Activated naive CD4-positive, alpha-beta T cell treated with anti-CD3 and anti-CD28 coated beads, Interleukin-2, amount 10 ng/mL, durations not matched to agents 7 days and 5 days (primary cell): ENCODE measurements at regions of chr15 and their contacts with region 1.

Region 1: DNA sequence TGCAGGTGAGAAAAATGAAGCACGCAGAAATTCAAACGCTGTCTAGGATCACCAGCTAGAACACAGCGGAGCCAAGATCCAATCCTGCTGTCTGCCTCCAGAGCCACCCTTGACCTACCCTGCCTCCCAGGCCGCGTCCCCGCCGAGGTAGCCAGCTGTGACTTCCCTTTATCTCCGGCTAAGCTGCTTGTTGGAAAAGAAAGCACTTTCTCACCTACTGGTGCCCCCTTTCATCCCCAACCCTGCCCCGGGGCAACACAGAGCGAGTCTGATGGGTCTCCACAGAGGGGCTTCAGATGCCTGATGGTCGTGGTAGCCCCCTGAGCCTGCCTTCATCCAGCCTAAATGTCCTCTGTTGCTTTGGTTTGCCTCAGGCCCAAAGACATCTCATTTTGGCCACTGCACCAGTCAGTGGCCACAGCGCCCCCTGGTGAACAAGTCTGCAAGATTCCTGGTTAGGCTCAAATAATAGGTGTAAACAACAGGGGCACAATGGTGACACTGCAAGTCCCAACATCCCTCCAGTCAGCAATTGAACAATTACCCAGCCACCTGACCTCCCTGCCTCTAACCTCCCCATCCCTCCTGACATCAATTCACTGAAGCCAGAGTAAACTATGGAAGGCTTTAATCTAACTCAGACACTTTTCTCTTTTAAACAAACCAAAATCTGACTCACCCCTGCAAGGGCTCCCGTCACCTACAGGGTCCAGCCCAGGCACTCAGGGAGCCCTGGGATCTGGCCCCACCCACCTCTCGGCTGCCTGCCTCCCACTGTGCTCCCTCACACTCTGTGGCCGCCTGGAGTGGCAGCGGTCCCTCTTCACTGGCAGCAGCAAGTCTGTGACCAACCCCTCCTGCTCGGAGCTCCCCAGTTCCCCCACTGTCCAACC is 27.3 kb upstream of the BCL2L10 start:
- DNase-seq: peak; percentile 80
- H3K4me3 Mint-ChIP-seq: no peak overlapping the region
- H3K27ac Mint-ChIP-seq: peak overlapping the region; percentile 10
- H3K4me1 Mint-ChIP-seq: peaks cover 17% of the 10 kb centered on the region
- H3K27me3 Mint-ChIP-seq: no peaks in the 10 kb centered on the region

Region 2: DNA sequence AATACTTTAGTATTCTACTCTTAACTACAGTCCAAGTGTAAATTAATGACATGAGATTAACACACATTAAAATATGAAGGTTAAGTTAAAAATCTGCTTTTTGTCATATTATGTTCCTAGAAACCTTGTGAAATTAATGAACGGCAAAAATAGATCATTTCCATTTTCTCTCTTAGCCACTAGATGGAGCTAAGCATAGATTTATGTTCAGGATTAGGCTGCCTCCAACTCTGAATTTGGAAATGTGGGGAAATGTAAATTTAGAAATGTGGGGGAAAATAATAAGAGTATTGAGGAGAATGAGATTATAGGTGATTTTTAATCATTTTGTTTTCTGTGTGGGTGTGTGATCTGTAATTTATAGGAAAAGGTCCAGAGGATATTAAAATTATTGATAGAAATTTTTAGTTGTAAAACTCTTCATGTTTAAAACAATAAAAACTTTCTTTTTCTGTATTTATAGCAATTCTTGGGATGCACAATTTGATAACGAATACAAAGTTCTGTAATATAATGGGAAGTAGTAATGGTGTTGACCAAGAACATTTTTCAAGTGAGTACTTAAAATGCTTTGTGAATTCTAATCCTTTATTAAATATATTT is 251.2 kb before region 1 on chr15:
- CTCF ChIA-PET with region 1: interaction called, 13 read pairs
- DNase-seq: no peak
- H3K4me3 Mint-ChIP-seq: no peak overlapping the region
- H3K27ac Mint-ChIP-seq: no peak overlapping the region
- H3K4me1 Mint-ChIP-seq: no peaks in the 10 kb centered on the region
- H3K27me3 Mint-ChIP-seq: no peaks in the 10 kb centered on the region

Region 3: DNA sequence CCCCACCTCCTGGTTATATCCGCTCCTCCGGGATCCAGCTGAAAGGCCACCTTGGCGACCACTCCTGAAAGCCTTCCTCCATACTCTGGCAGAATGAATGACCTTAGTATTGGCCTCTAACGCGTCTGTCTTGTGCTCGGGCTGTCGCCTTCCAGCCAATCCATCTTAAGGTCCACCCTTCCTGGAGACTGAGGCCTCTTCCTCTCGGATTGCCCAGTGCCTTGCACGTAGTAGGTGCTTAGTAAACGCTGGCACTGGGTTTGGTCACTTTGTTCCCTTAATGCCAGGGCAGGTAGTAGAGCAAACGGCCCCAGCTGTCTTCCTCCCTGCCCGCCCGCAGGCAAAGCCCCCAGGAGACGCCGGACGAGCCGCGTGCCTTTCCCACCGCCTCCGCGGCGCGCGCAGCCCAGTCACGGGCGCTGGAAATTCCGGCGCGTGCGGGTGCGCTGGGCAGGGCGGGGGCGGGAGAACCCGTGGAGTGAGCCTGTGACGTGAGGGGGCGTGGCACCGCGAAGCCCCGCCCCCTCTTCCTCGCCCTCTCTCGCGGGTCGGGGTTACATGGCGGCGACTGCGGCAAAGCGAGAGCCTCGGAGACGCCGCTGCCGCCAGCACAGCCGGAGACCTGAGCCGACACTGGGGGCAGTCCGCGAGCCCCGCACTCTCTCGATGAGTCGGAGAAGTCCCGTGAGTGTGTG is 121.0 kb before region 1 on chr15 and contains the start of gene MAPK6:
- CTCF ChIA-PET with region 1: no interaction called
- DNase-seq: peak; percentile 94
- H3K4me3 Mint-ChIP-seq: peak within 1 kb of the TSS; percentile 98
- H3K27ac Mint-ChIP-seq: peak within 1 kb of the TSS; percentile 99
- H3K4me1 Mint-ChIP-seq: peaks cover 39% of the 10 kb centered on the region
- H3K27me3 Mint-ChIP-seq: peaks cover 14% of the 10 kb centered on the region